ENCODE measurements at regions of chr1 and their contacts with region 1.

Region 1: DNA sequence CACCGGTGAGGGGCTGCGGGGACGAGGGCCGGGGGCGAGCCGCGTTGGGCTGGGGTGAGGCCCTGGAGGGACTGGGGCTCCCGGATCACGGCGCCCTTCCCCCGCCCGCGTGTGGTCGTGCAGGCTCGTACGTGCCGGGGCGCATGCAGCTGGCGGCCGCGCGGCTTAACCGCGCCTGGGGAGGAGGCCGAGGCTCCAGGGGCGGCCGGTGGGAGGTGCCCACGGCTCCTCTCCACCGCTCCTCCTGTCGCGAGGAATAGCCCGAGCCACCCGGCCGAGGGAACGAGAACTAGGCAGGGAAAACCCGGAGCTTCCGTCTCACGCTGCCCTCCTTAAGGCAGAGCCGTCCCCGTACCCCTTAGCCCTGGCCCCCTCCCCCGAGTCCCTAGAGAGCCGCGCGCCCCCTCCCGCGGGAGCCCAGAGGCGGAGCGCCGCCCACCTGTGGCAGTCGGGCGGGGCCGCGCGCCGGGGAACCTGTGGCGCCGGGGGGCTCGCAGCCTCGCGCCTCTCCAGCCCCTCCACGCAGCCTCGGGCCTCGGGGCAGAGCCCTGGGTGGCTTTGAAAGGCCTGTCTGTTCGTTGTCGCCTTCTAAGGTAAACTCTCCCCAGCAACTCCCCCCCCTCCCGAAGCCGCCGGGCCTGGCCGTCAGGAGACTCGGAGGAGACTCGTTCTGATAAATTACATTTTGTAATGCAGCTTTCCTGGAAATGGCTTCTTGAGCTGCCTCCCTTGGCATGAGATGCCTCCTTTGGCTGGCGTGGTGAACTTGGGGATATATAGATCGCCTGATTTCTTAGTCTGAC is 746 bp downstream of the AK4 start:
- DNase-seq: peak; percentile 12
- H3K4me3 ChIP-seq: peak overlapping the region; percentile 38 to 50 (median 44)
- H3K27ac ChIP-seq: no peak overlapping the region
- H3K4me1 ChIP-seq: no peaks in the 10 kb centered on the region
- H3K27me3 ChIP-seq: peaks cover 0 to 13% of the 10 kb centered on the region in 2 experiments
- CTCF ChIP-seq: no peak
- POLR2A ChIP-seq: no peak

Region 2: DNA sequence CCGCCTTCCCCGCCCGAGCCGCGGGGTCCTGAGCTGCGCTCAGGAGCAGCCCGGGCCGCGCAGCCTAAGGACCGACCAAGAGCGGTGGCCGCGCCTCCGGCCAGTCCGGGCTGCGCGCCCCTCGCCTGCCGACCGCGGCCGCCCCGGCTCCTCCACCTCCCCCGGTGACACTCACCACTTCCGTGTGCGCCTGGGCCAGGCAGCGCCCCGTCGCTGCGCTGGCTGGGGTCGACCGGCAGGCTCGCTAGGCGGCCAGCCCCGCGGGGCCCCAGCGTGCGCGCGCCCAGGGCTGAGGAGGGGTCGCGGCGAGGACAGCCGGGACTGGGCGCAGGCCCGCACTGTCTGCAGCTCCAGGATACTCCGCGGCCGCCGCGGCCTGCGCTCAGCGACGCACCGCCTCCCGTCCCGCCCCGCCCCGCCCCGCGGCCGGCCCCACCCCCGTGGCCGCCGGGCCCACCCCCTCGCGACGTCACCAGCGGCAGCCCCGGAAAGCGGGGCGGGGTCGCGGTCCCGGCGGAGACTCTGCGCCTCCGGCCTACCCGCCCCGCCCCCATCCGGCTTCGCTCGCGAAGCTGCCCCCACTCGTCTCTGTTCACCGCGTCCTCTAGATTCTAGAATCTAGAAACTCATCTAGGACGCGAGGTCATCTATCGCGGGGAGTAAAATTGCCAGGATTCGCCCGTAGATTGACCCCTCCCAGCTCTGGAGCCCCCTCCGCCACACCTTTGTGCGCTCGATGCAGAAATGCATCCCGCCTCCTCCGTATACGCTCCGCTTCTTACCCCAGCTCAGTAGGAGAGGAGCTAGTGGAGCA is 182.4 kb before region 1 on chr1 and contains the start of gene JAK1:
- CTCF ChIA-PET with region 1: no interaction called
- POLR2A ChIA-PET with region 1: no interaction called
- dilution Hi-C with region 1: no loop called
- intact Hi-C with region 1: no loop called
- DNase-seq: peak; percentile 76
- H3K4me3 ChIP-seq: peak within 1 kb of the TSS; percentile 79 to 94 (median 85)
- H3K27ac ChIP-seq: peak within 1 kb of the TSS; percentile 92
- H3K4me1 ChIP-seq: peaks cover 34% of the 10 kb centered on the region
- H3K27me3 ChIP-seq: no peaks in the 10 kb centered on the region
- CTCF ChIP-seq: no peak
- POLR2A ChIP-seq: peak; percentile 97
- total RNA-seq, gene JAK1: 152 and 177 TPM in 2 replicates

Region 3: GRCh38 chr1:65067491-65068201 is 81.1 kb before region 1 on chr1:
- CTCF ChIA-PET with region 1: no interaction called
- POLR2A ChIA-PET with region 1: no interaction called
- dilution Hi-C with region 1: no loop called
- intact Hi-C with region 1: loop called (anchors 2 kb)
- DNase-seq: peak; percentile 84
- H3K4me3 ChIP-seq: peak overlapping the region; percentile 48 to 88 (median 85)
- H3K27ac ChIP-seq: peak overlapping the region; percentile 82
- H3K4me1 ChIP-seq: peaks cover 14% of the 10 kb centered on the region
- H3K27me3 ChIP-seq: no peaks in the 10 kb centered on the region
- CTCF ChIP-seq: no peak
- POLR2A ChIP-seq: no peak

Region 4: GRCh38 chr1:65189576-65190115 is 40.9 kb after region 1 on chr1:
- CTCF ChIA-PET with region 1: no interaction called
- POLR2A ChIA-PET with region 1: no interaction called
- dilution Hi-C with region 1: no loop called
- intact Hi-C with region 1: no loop called
- DNase-seq: no peak
- H3K4me3 ChIP-seq: no peak overlapping the region
- H3K27ac ChIP-seq: no peak overlapping the region
- H3K4me1 ChIP-seq: no peaks in the 10 kb centered on the region
- H3K27me3 ChIP-seq: no peaks in the 10 kb centered on the region
- CTCF ChIP-seq: no peak
- POLR2A ChIP-seq: no peak